Gastrocnemius medialis (tissue), 4 donors: ENCODE measurements at regions of chr7 and their contacts with region 1.

Region 1: DNA sequence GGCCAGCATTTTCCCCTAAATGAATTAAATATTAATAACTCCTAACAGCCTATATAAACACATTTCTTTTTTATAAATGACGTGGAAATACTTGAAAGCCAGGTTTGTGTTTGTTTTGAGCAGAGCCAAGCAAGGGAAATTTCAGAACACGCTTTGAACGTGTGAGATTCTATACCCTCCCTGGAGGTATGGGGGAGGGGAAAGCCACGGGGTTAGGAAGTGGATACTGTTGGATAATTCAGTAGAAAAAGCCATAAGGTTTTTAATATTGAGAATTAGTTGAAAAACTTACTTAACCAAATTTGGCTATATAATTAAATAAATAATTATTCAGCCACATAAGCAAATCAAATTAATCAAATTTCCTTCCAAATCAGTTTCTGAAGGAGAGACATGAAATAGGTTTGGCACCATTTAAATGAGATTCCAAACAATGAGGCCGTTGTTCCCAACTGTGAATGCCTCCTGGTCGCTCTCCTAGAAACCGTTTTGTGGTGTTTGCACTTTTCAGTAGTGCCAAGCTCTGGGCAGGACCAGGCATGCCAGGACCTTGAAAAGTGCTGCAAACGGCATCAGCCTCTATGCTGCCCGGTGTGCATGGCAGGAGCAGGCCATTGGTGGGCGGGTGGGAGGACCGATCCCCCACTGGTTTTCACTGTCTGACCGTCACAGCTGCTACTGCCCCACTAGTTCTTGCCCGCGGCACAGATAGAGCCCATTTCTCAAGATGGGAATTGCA is 88.1 kb downstream of the SEPTIN14 start:
- DNase-seq: no peak
- ATAC-seq: no peak
- H3K4me3 ChIP-seq: no peak overlapping the region
- H3K27ac ChIP-seq: no peak overlapping the region
- H3K4me1 ChIP-seq: no peaks in the 10 kb centered on the region
- H3K27me3 ChIP-seq: no peaks in the 10 kb centered on the region
- CTCF ChIP-seq: no peak
- POLR2A ChIP-seq: no peak

Region 2: DNA sequence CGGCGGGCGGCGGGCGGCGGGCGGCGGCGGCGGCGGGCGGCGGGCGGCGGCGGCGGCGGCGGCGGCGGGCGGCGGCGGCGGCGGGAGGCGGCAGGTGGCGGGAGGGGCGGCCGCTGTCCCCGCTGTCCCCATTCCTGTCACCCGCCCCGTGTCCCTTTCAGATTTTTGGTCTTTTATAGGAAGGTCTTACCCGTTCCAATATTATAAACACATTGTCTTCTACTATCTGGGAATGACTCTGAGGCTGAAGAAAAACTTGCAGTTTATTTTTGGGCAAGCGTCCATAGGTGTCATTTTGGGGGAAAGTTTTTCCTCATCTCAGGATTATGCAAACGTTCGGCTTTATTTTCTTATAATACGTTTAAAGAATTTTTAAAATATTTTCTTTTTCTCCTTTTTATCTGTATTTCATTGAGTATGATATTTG is 113.3 kb after region 1 on chr7:
- in situ Hi-C with region 1: no loop called
- intact Hi-C with region 1: no loop called
- DNase-seq: no peak
- ATAC-seq: no peak
- H3K4me3 ChIP-seq: peak overlapping the region; percentile 54 to 83 (median 60)
- H3K27ac ChIP-seq: peak overlapping the region; percentile 75 to 81 (median 79)
- H3K4me1 ChIP-seq: no peaks in the 10 kb centered on the region
- H3K27me3 ChIP-seq: no peaks in the 10 kb centered on the region
- CTCF ChIP-seq: no peak
- POLR2A ChIP-seq: no peak

Region 3: GRCh38 chr7:56028942-56029630 is 254.6 kb after region 1 on chr7:
- in situ Hi-C with region 1: loop called in 1 of 4 experiments (anchors 10 kb)
- intact Hi-C with region 1: no loop called
- DNase-seq: no peak
- ATAC-seq: no peak
- H3K4me3 ChIP-seq: no peak overlapping the region
- H3K27ac ChIP-seq: no peak overlapping the region
- H3K4me1 ChIP-seq: peaks cover 0 to 5% of the 10 kb centered on the region in 2 donors
- H3K27me3 ChIP-seq: no peaks in the 10 kb centered on the region
- CTCF ChIP-seq: no peak
- POLR2A ChIP-seq: no peak